Esophagus squamous epithelium (tissue), 5 donors: ENCODE measurements at regions of chr1 and their contacts with region 1.

Region 1: GRCh38 chr1:48817505-48818114 is 40.9 kb upstream of the BEND5 start:
- DNase-seq: no peak
- H3K4me3 ChIP-seq: no peak overlapping the region
- H3K27ac ChIP-seq: no peak overlapping the region
- H3K4me1 ChIP-seq: no peaks in the 10 kb centered on the region
- H3K27me3 ChIP-seq: peaks cover 0 to 15% (median 0%) of the 10 kb centered on the region in 4 donors
- CTCF ChIP-seq: peak; percentile 32 to 66 (median 54)
- POLR2A ChIP-seq: no peak

Region 2: GRCh38 chr1:48677306-48678287 is 140.0 kb before region 1 on chr1:
- intact Hi-C with region 1: loop called (anchors 5 kb)
- DNase-seq: no peak
- H3K4me3 ChIP-seq: no peak overlapping the region
- H3K27ac ChIP-seq: no peak overlapping the region
- H3K4me1 ChIP-seq: peaks cover 0 to 6% (median 0%) of the 10 kb centered on the region in 3 donors
- H3K27me3 ChIP-seq: peaks cover 0 to 32% (median 0%) of the 10 kb centered on the region in 4 donors
- CTCF ChIP-seq: peak; percentile 43 to 66 (median 58)
- POLR2A ChIP-seq: no peak

Region 3: GRCh38 chr1:48916130-48917069 is 98.8 kb after region 1 on chr1:
- intact Hi-C with region 1: no loop called
- DNase-seq: no peak
- H3K4me3 ChIP-seq: no peak overlapping the region
- H3K27ac ChIP-seq: no peak overlapping the region
- H3K4me1 ChIP-seq: no peaks in the 10 kb centered on the region
- H3K27me3 ChIP-seq: no peaks in the 10 kb centered on the region
- CTCF ChIP-seq: peak in 4 of 6 experiments; percentile 7 to 40 (median 24)
- POLR2A ChIP-seq: no peak